ENCODE measurements at regions of chr18 and their contacts with region 1.

Region 1: DNA sequence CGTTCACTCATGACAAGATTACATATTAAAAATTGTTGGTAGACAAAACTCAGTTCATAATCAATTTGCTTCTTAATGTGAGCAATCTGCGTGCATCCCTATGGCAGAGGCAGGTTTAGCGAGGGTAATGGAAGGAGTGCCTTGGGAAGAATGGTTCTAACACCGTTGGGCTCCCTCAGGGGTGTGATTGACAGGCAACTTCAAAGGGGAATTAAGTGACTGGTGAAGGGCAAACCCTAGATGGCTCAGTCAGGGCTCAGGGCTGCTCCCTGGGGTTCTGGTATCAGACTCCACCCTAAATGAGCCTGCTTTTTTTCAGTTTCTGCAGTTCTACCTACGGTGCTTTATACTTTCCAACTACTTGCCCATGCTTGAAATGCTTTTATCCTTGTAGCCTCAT is 419.5 kb upstream of the CELF4 start:
- DNase-seq: no peak
- ATAC-seq: no peak
- H3K4me3 ChIP-seq: no peak overlapping the region
- H3K4me3 Mint-ChIP-seq: no peak overlapping the region
- H3K27ac ChIP-seq: no peak overlapping the region
- H3K27ac Mint-ChIP-seq: no peak overlapping the region
- H3K4me1 ChIP-seq: no peaks in the 10 kb centered on the region
- H3K4me1 Mint-ChIP-seq: no peaks in the 10 kb centered on the region
- H3K27me3 ChIP-seq: no peaks in the 10 kb centered on the region
- H3K27me3 Mint-ChIP-seq: no peaks in the 10 kb centered on the region
- CTCF ChIP-seq: no peak

Region 2: DNA sequence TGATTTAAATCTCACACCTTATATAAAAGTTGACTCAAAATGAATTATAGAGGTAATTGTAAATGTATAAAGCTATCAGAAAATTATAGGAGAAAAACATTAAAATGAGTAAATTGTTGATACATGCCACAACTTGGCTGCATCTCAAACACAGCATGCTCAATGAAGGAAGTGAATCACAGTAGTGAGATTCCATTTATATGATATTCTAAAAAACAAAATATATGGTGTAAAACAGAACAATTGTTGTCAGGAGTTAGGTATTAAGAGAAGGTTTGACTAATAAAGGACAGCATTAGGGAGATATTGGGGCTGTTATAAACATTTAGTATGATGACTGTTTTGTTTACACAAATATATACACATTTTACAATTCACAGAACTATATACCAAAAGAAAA is 63.0 kb before region 1 on chr18:
- CTCF ChIA-PET with region 1: no interaction called
- POLR2A ChIA-PET with region 1: no interaction called
- intact Hi-C with region 1: loop called in 1 of 2 experiments (anchors 10 kb)
- DNase-seq: no peak
- ATAC-seq: no peak
- H3K4me3 ChIP-seq: no peak overlapping the region
- H3K4me3 Mint-ChIP-seq: no peak overlapping the region
- H3K27ac ChIP-seq: no peak overlapping the region
- H3K27ac Mint-ChIP-seq: no peak overlapping the region
- H3K4me1 ChIP-seq: no peaks in the 10 kb centered on the region
- H3K4me1 Mint-ChIP-seq: no peaks in the 10 kb centered on the region
- H3K27me3 ChIP-seq: no peaks in the 10 kb centered on the region
- H3K27me3 Mint-ChIP-seq: no peaks in the 10 kb centered on the region
- CTCF ChIP-seq: no peak

Measured in CD8-positive, alpha-beta T cell (primary cell).